ENCODE measurements at regions of chr16 and their contacts with region 1.

Region 1: DNA sequence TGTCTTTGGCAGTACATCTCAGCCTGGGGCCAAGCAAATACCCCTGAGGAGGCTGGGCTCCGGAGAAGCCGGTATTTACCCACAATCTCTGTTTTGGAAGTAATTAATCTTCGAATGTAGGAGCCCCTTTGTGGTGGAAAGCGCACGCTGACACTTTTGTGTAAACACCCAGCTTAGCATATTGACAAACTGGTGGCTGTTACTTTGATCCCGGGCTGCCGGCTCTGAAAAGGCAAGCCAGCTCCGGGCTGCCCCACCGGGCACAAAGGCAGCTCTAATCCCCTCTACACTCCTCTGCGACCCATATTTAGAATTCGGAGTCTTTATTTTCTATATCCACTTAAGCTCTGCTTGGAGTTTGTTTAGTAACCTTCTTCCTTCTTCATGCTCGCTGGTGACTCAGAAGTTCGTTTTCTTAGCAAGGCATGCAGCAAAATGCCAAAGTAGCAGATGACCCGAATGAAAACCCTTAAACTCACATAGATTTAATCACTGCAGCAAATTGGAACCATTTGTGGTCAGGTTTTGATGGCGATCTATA is 144.0 kb upstream of the IRX3 start:
- DNase-seq: peak; percentile 69
- ATAC-seq: peak; percentile 89
- H3K4me3 ChIP-seq: peak overlapping the region in 2 of 3 experiments; percentile 3 to 8; a peak in 2 of 6 replicates
- H3K27ac ChIP-seq: no peak overlapping the region
- H3K4me1 ChIP-seq: peaks cover 51% of the 10 kb centered on the region
- H3K27me3 ChIP-seq: peaks cover 2 to 52% of the 10 kb centered on the region in 2 experiments; a peak in 4 of 5 replicates
- CTCF ChIP-seq: no peak
- EP300 ChIP-seq: peak in 1 of 2 experiments; percentile 68; a peak in 2 of 4 replicates
- POLR2A ChIP-seq: no peak
- RAD21 ChIP-seq: no peak

Region 2: DNA sequence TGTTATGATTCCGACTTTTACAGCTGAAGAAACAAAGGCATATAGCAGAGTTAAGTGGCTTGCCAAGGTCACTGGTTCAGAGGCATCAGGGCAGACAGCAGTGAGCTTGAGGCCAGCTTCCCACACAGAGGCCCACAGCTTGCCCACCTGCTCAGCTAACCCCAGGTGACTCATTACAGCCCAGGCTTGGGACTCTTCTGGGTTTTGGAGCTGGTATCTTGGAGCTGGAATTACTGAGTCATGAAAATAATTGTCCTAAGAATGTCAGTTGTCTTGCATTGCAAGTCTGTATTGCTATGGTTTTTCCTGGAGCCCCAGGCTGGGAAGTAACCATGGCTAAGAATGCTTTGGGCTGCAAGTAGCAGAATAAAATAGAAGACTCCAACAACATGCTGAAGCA is 111.6 kb before region 1 on chr16:
- CTCF ChIA-PET with region 1: no interaction called
- POLR2A ChIA-PET with region 1: no interaction called
- in situ Hi-C with region 1: no loop called
- intact Hi-C with region 1: loop called (anchors 10 kb)
- DNase-seq: no peak
- ATAC-seq: no peak
- H3K4me3 ChIP-seq: no peak overlapping the region
- H3K27ac ChIP-seq: no peak overlapping the region
- H3K4me1 ChIP-seq: no peaks in the 10 kb centered on the region
- H3K27me3 ChIP-seq: peaks cover 3 to 37% of the 10 kb centered on the region in 2 experiments; a peak in 4 of 5 replicates
- CTCF ChIP-seq: no peak
- EP300 ChIP-seq: no peak
- POLR2A ChIP-seq: no peak
- RAD21 ChIP-seq: no peak

Measured in HepG2 (cell line).